ENCODE measurements at regions of chr11 and their contacts with region 1.

Region 1: DNA sequence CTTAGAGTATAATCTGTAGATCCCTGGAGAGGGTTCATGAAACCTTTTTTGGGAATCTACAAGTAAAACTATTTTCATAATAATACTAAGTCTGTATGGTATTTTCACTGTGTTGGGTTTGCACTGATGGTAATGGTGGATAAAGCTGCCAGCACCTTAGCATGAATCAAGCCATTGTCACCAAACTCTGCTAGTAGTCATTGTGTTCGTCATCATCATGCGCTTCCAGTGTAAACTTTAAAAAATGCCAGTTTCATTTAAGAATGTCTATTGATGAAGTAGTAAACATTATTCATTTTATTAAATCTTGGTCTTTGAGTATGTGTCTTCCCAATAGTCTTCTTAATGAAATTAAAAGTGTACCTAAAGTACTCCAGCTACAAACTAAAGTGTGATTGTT is 15.0 kb downstream of the ALKBH3 start:
- DNase-seq: no peak
- H3K4me3 ChIP-seq: no peak overlapping the region
- H3K27ac ChIP-seq: no peak overlapping the region
- H3K4me1 ChIP-seq: no peaks in the 10 kb centered on the region
- CTCF ChIP-seq: no peak

Region 2: DNA sequence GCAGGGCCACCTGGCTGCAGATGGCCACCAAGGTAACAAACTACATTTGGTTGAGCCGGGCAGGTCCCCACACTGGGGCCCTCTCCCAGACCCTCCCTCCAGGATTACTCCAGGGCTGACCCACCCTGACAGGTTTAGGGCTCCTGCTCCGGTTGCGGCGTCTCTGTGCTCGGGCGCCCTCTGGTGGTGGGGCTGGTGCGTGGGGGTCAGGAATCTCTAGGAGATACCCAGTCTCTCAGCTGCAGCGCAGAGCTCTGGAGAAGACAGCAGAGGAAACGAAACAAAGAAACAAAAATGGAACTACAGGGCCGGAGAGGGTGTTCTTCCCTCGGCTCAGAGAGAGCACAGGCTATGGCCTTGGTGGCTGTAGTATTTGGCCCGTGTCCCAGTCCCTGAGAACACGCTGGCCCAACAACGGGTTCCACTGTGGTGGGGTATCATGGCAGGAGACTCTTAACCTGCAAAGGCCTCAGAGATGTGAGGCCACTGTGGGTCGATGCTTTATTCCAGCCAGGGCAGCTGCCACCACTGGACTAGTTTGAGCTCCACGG is 49.2 kb after region 1 on chr11:
- CTCF ChIA-PET with region 1: no interaction called
- POLR2A ChIA-PET with region 1: no interaction called
- intact Hi-C with region 1: loop called (anchors 2 kb)
- DNase-seq: peak; percentile 31
- H3K4me3 ChIP-seq: no peak overlapping the region
- H3K27ac ChIP-seq: no peak overlapping the region
- H3K4me1 ChIP-seq: no peaks in the 10 kb centered on the region
- CTCF ChIP-seq: peak; percentile 88

Region 3: DNA sequence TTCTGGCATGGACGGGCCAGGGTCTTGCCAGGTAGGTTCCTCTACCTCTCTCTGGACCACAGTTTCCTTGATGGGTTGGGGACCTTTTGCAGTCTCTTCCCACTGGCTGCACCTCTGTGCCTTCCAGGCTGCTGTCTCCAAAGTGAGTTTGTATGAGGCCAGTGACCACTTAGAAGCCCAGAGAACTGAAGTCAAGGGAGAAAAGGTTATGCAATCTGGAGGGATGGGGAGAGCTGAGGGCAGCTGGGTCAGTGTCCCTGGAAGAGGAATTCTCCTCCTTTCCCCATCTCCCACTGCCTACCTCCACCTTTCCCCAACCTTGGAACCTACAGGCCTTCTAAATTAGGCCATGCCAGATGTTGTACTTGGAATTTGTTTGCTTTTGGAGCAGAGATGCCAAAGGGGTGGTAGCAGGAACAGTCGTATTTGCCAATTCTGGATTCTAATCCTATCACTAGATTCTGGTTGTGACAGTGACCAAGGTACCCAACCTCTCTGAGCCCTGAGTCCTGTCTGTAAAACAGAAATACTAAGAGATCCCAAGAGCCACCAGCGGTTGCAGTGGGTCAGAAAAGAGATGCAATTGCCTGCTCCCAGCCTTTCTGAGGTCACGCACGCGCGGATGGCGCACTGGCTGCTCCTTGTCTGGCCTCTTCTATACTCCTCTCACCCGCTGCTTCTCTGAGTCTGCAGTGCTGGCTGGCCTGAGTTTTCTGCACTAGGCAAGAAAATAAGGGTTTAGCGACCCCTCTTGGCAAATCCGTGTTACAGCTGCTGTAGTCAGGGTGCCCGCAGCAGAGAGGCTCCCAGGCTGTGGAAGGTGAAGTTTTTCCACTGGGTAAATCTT is 141.4 kb after region 1 on chr11:
- CTCF ChIA-PET with region 1: no interaction called
- POLR2A ChIA-PET with region 1: no interaction called
- intact Hi-C with region 1: loop called (anchors 5 kb)
- DNase-seq: peak; percentile 34
- H3K4me3 ChIP-seq: no peak overlapping the region
- H3K27ac ChIP-seq: no peak overlapping the region
- H3K4me1 ChIP-seq: no peaks in the 10 kb centered on the region
- CTCF ChIP-seq: peak; percentile 70

Measured in OCI-LY7 (cell line).